Calu3 (cell line): ENCODE measurements at regions of chr17 and their contacts with region 1.

Region 1: DNA sequence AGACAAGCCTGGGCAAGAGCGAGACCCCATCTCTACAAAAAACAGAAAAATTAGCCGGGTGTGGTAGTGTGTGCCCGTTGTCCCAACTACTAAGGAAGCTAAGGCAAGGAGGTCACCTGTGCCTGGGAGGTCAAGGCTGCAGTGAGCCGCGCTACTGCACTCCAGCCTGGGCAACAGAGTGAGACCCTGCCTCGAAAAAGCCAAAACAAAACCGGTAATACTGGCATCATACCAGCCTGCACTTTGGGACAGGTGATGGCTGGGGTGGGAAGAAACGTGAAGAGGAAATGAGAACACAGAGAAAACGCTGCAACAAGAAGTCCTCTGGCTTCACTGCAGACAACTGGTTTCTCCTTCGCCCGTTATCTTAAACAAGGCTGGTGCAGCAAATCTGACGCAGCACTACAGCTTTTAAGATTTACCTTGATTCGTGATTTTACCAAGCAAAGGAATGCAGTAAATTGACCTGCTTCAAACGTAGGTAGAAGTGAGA is 725 bp upstream of the CASC3 start:
- DNase-seq: peak; percentile 72
- H3K4me3 Mint-ChIP-seq: peak overlapping the region; percentile 98
- H3K27ac Mint-ChIP-seq: peak overlapping the region; percentile 98
- H3K4me1 Mint-ChIP-seq: peaks cover 45% of the 10 kb centered on the region
- H3K27me3 Mint-ChIP-seq: no peaks in the 10 kb centered on the region
- CTCF ChIP-seq: no peak

Region 2: GRCh38 chr17:40062329-40063186 is 77.1 kb before region 1 on chr17 and contains the start of gene THRA:
- CTCF ChIA-PET with region 1: interaction called, 27 read pairs
- intact Hi-C with region 1: no loop called
- DNase-seq: peak; percentile 100
- H3K4me3 Mint-ChIP-seq: peak within 1 kb of the TSS; percentile 54
- H3K27ac Mint-ChIP-seq: peak within 1 kb of the TSS; percentile 27
- H3K4me1 Mint-ChIP-seq: peaks cover 55% of the 10 kb centered on the region
- H3K27me3 Mint-ChIP-seq: peaks cover 52% of the 10 kb centered on the region
- CTCF ChIP-seq: no peak
- total RNA-seq, gene THRA: 107 and 133 TPM in 2 replicates

Region 3: DNA sequence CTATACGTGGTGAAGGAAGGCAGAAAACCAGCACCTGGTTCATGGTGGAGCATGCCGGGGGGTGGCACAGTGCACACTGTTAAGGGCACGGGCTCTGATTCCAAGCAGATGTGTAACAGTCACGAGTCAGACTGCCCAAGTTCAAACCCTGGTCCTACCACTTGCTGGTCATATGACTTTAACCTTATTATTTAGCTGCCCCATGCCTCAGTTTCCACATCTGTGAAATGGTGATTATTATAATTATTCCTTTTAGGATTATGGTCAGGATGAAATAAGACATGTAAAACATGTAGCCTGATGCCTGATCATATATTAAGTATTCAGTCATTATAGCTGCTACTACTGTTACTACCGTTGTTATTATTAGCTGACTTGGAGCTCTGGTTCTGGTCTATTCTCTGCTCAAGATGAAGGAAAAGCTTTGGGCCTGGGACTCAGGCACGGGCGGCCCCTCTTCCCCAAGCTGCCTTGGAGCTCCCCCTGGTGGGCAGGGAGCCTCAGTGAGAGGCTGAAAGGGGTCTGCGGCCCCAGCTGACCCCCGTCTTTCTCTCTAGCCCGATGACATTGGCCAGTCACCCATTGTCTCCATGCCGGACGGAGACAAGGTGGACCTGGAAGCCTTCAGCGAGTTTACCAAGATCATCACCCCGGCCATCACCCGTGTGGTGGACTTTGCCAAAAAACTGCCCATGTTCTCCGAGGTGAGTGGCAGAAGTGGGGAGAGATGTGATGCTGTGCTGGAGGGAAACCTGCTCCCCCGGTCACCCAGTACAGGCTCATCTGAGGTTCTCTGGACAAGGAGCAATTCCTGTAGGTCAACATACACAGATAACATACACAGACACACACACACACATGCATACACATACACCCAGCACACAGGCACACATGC is 53.2 kb before region 1 on chr17:
- CTCF ChIA-PET with region 1: interaction called, 13 read pairs
- intact Hi-C with region 1: no loop called
- DNase-seq: peak; percentile 100
- H3K4me3 Mint-ChIP-seq: no peak overlapping the region
- H3K27ac Mint-ChIP-seq: no peak overlapping the region
- H3K4me1 Mint-ChIP-seq: no peaks in the 10 kb centered on the region
- H3K27me3 Mint-ChIP-seq: no peaks in the 10 kb centered on the region
- CTCF ChIP-seq: no peak

Region 4: DNA sequence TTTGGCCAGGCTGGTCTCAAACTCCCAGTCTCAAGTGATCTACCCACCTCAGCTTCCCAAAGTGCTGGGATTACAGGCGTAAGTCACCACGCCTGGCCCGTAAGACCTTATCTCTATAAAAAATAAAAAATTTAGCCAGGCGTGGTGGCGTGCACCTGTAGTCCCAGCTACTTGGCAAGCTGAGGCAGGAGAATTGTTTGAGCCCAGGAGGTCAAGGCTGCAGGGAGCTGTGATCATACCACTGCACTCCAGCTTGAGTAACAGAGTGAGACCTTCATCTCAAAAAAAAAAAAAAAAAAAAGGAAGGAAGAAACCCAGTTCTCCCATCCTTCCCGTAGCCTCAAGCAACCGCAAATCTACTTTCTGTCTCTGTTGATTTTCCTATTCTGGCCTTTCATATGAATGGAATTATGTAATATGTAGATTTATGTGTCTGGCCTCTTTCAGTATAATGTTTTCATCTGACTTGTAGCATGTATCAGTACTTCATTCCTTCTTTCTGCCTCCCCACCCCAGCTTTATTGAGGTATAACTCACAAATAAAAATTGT is 11.9 kb after region 1 on chr17:
- CTCF ChIA-PET with region 1: interaction called, 39 read pairs
- intact Hi-C with region 1: no loop called
- DNase-seq: no peak
- H3K4me3 Mint-ChIP-seq: no peak overlapping the region
- H3K27ac Mint-ChIP-seq: no peak overlapping the region
- H3K4me1 Mint-ChIP-seq: peaks cover 5% of the 10 kb centered on the region
- H3K27me3 Mint-ChIP-seq: no peaks in the 10 kb centered on the region
- CTCF ChIP-seq: no peak

Region 5: DNA sequence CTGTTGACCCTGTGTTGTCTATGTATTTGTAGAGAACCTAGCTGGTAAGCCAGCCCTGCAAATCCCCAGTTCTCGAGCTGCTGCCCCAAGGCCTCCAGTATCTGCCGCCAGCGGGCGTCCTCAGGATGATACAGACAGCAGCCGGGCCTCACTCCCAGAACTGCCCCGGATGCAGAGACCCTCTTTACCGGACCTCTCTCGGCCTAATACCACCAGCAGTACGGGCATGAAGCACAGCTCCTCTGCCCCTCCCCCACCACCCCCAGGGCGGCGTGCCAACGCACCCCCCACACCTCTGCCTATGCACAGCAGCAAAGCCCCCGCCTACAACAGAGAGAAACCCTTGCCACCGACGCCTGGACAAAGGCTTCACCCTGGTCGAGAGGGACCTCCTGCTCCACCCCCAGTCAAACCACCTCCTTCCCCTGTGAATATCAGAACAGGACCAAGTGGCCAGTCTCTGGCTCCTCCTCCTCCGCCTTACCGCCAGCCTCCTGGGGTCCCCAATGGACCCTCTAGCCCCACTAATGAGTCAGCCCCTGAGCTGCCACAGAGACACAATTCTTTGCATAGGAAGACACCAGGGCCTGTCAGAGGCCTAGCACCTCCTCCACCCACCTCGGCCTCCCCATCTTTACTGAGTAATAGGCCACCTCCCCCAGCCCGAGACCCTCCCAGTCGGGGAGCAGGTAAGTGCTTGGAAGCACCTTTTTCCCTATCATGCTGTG is 125.0 kb after region 1 on chr17:
- CTCF ChIA-PET with region 1: interaction called, 15 read pairs
- intact Hi-C with region 1: no loop called
- DNase-seq: no peak
- H3K4me3 Mint-ChIP-seq: no peak overlapping the region
- H3K27ac Mint-ChIP-seq: no peak overlapping the region
- H3K4me1 Mint-ChIP-seq: no peaks in the 10 kb centered on the region
- H3K27me3 Mint-ChIP-seq: no peaks in the 10 kb centered on the region
- CTCF ChIP-seq: no peak

Region 6: DNA sequence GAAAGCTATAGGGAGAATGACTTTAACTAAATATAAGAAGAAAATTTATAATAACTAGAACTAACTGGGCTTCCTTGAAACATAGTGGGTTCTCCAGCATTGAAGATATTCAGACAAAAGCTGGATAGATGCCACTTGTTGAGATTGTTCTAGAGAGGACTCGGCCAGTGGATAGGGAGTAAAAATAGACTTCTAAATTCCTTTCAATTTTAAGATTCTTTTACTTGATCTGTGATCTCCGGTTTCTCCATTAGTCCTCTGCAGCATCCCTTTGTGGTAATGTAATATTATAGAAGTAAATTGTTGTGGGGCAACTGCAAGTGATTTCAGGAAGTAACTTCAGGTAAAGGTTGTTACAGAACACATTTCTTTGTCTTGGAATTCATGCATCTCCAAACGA is 159.1 kb after region 1 on chr17:
- CTCF ChIA-PET with region 1: no interaction called
- intact Hi-C with region 1: no loop called
- DNase-seq: no peak
- H3K4me3 Mint-ChIP-seq: no peak overlapping the region
- H3K27ac Mint-ChIP-seq: no peak overlapping the region
- H3K4me1 Mint-ChIP-seq: peaks cover 44% of the 10 kb centered on the region
- H3K27me3 Mint-ChIP-seq: no peaks in the 10 kb centered on the region
- CTCF ChIP-seq: no peak

Region 7: GRCh38 chr17:40779181-40779909 is 639.7 kb after region 1 on chr17:
- CTCF ChIA-PET with region 1: no interaction called
- intact Hi-C with region 1: no loop called
- DNase-seq: no peak
- H3K4me3 Mint-ChIP-seq: no peak overlapping the region
- H3K27ac Mint-ChIP-seq: no peak overlapping the region
- H3K4me1 Mint-ChIP-seq: no peaks in the 10 kb centered on the region
- H3K27me3 Mint-ChIP-seq: peaks cover 72% of the 10 kb centered on the region
- CTCF ChIP-seq: no peak